ENCODE measurements at regions of chr16 and their contacts with region 1.

Region 1: GRCh38 chr16:89453501-89454321 is 36.6 kb downstream of the ANKRD11 start:
- DNase-seq: no peak
- H3K4me3 ChIP-seq: no peak overlapping the region
- H3K27ac ChIP-seq: no peak overlapping the region
- H3K4me1 ChIP-seq: peaks cover 0 to 4% (median 3%) of the 10 kb centered on the region in 4 experiments; a peak in 4 of 7 replicates
- H3K27me3 ChIP-seq: no peaks in the 10 kb centered on the region
- CTCF ChIP-seq: peak in 2 of 3 experiments; percentile 54 to 60; a peak in 2 of 4 replicates
- EP300 ChIP-seq: no peak
- POLR2A ChIP-seq: no peak
- RAD21 ChIP-seq: peak in 1 of 2 experiments; percentile 45; a peak in 3 of 4 replicates

Region 2: GRCh38 chr16:89466920-89467319 is 13.2 kb after region 1 on chr16:
- CTCF ChIA-PET with region 1: interaction called, 10 read pairs
- POLR2A ChIA-PET with region 1: interaction called, 6 read pairs
- DNase-seq: no peak
- H3K4me3 ChIP-seq: no peak overlapping the region
- H3K27ac ChIP-seq: no peak overlapping the region
- H3K4me1 ChIP-seq: peaks cover 4 to 10% (median 7%) of the 10 kb centered on the region in 4 experiments; a peak in 5 of 7 replicates
- H3K27me3 ChIP-seq: no peaks in the 10 kb centered on the region
- CTCF ChIP-seq: no peak
- EP300 ChIP-seq: no peak
- POLR2A ChIP-seq: no peak
- RAD21 ChIP-seq: no peak

Measured in H1 (cell line).